Naive thymus-derived CD4-positive, alpha-beta T cell (primary cell): ENCODE measurements at regions of chr1 and their contacts with region 1.

Region 1: DNA sequence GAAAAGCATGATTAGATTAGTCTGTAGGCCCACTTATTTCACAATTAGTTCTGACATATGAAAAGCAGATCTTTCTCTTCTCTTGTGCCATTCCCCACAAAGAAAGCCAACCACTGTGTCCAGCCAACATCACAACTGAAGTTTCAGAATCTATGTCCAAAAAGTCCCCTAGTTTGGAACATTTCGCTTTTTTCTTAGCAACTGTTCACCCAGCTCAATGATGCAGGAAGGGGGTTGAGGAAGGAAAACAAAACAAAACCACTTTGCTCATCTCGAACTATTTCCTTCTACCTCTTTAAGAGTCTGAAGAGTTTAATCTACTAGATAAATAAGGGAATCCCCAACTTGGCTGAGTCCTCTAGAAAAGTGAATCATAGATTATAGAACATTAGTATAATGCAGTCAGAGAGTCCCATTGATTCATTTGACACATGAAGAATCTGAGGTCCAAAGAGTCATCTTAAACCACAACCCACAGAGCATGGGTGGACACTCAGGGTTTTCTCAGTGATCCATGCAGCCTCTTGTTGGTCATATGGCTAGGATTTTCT is 159.3 kb upstream of the SGIP1 start:
- DNase-seq: peak in 7 of 9 donors; percentile 27 to 49 (median 40)
- ATAC-seq: peak; percentile 83
- H3K4me3 ChIP-seq: no peak overlapping the region
- H3K4me3 Mint-ChIP-seq: peak overlapping the region in 9 of 10 donors; percentile 46 to 83 (median 67)
- H3K27ac ChIP-seq: peak overlapping the region; percentile 62
- H3K27ac Mint-ChIP-seq: peak overlapping the region; percentile 88 to 96 (median 92)
- H3K4me1 ChIP-seq: peaks cover 51 to 53% of the 10 kb centered on the region in 2 donors
- H3K4me1 Mint-ChIP-seq: peaks cover 52 to 74% (median 65%) of the 10 kb centered on the region in 7 donors
- H3K27me3 ChIP-seq: no peaks in the 10 kb centered on the region
- H3K27me3 Mint-ChIP-seq: no peaks in the 10 kb centered on the region

Region 2: DNA sequence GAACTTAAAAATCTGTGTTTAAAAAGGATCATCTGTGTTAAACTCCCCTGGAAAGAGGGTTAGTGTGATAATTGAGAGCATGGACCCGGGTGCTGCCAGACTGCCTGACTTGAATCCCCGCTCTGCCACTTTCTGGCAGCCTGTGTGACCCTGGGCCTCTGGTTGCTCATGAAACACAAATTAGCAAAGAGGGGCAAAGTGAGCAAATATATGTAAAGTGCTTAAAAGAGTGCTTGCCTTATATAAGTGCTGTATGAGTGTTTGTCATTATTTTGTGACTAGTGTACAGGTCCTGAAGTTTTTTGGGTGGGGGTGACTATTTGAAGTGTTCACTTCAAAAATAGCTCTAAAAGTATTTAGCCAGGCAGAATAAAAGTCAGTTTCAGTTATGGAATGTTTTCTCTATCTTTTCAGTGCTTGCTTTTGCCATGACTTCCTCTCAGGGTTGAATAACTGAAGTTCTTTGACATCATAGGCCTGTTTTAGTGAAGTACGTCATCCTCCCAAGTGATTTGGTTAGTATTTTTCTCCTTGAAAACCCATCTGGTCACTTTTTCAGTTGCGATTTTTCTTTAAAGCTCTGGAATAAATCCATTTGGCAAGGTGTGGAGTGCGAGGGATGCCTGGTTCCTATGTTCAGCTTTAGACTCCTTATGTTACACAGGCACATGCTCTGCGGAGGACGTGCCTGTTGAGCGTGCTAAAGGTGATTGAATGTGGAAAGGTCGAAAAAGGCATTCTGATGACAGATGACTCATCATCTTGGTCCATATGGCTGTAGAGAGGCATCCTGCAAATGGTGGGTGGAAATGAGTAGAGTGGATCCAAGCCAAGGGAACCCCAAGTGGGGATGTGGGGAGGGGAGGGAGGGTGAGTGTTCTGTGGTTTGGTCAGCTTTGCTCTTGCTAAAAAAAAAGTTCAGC is 1178.9 kb before region 1 on chr1:
- CTCF ChIA-PET with region 1: no interaction called
- POLR2A ChIA-PET with region 1: no interaction called
- intact Hi-C with region 1: no loop called
- DNase-seq: no peak
- ATAC-seq: no peak
- H3K4me3 ChIP-seq: no peak overlapping the region
- H3K4me3 Mint-ChIP-seq: no peak overlapping the region
- H3K27ac ChIP-seq: no peak overlapping the region
- H3K27ac Mint-ChIP-seq: peak overlapping the region in 1 of 9 donors; percentile 20
- H3K4me1 ChIP-seq: no peaks in the 10 kb centered on the region
- H3K4me1 Mint-ChIP-seq: peaks cover 0 to 17% (median 0%) of the 10 kb centered on the region in 7 donors
- H3K27me3 ChIP-seq: no peaks in the 10 kb centered on the region
- H3K27me3 Mint-ChIP-seq: peaks cover 0 to 11% (median 0%) of the 10 kb centered on the region in 5 donors

Region 3: DNA sequence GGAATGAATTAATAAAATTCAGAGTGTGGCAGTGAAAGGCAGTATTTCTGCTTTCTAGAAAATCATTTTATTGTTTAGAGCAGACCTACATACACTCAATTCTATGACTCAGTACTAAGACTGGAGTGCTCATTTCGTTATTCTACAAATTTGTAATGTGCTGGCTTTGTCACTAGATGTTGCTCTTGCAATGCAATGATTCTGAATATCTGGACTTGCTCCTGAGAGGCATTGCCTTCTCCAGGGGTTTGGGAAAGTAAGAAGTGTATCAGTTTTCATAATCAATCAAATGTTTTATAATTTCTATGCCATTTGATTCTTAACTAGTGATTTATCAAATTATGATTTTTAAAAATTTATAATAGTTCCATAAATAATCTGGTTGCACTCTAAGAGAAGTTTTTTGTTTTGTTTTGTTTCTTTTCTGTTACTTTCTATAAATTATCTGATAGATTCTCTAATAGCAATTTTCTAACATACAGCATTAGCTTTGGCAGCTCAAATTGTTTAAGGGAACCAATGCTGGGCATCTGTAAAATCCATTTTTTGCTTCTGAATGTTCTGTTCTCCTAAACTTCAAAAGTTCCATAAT is 121.2 kb before region 1 on chr1:
- CTCF ChIA-PET with region 1: no interaction called
- POLR2A ChIA-PET with region 1: no interaction called
- intact Hi-C with region 1: loop called in 1 of 2 experiments (anchors 2 kb)
- DNase-seq: peak in 6 of 9 donors; percentile 29 to 58 (median 46)
- ATAC-seq: peak; percentile 83
- H3K4me3 ChIP-seq: no peak overlapping the region
- H3K4me3 Mint-ChIP-seq: no peak overlapping the region
- H3K27ac ChIP-seq: no peak overlapping the region
- H3K27ac Mint-ChIP-seq: peak overlapping the region in 2 of 9 donors; percentile 19 to 64
- H3K4me1 ChIP-seq: peaks cover 10 to 12% of the 10 kb centered on the region in 2 donors
- H3K4me1 Mint-ChIP-seq: peaks cover 6 to 57% (median 19%) of the 10 kb centered on the region in 7 donors
- H3K27me3 ChIP-seq: no peaks in the 10 kb centered on the region
- H3K27me3 Mint-ChIP-seq: no peaks in the 10 kb centered on the region

Region 4: GRCh38 chr1:66276218-66276617 is 98.4 kb before region 1 on chr1:
- CTCF ChIA-PET with region 1: no interaction called
- POLR2A ChIA-PET with region 1: no interaction called
- intact Hi-C with region 1: no loop called
- DNase-seq: peak in 7 of 9 donors; percentile 23 to 58 (median 35)
- ATAC-seq: peak; percentile 74
- H3K4me3 ChIP-seq: peak overlapping the region; percentile 41
- H3K4me3 Mint-ChIP-seq: peak overlapping the region; percentile 14 to 89 (median 76)
- H3K27ac ChIP-seq: peak overlapping the region; percentile 60
- H3K27ac Mint-ChIP-seq: peak overlapping the region; percentile 39 to 97 (median 91)
- H3K4me1 ChIP-seq: peaks cover 50 to 72% of the 10 kb centered on the region in 2 donors
- H3K4me1 Mint-ChIP-seq: peaks cover 69 to 94% (median 92%) of the 10 kb centered on the region in 7 donors
- H3K27me3 ChIP-seq: no peaks in the 10 kb centered on the region
- H3K27me3 Mint-ChIP-seq: no peaks in the 10 kb centered on the region

Region 5: DNA sequence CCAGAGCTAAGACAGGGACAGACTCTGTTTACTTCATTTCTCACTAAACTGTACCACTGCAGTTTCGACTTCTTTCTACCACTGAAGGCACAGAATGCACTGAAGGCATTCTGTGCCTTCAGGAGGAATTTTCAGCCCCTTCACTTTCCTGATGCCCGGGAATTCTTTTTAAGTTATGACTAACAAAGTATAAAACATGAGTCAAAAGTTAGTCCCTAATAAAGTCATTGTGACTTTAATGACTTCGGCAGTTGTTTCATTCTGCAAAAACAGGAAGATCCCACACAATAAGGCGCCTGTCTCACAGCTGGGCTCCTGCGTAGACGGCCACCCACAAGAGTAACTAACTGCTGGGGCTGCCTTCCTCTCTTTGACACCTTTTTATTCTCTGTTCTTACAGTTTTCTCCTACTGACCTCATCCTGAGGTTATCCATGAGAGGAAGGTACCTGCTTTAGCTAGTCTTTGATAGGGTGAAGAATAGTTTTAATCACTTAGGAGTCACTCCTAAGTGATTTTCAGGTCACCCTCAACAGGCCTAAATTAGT is 24.6 kb before region 1 on chr1:
- CTCF ChIA-PET with region 1: no interaction called
- POLR2A ChIA-PET with region 1: no interaction called
- intact Hi-C with region 1: loop called in 1 of 2 experiments (anchors 1 kb)
- DNase-seq: peak in 7 of 9 donors; percentile 55 to 77 (median 71)
- ATAC-seq: peak; percentile 84
- H3K4me3 ChIP-seq: peak overlapping the region; percentile 33
- H3K4me3 Mint-ChIP-seq: peak overlapping the region; percentile 70 to 86 (median 77)
- H3K27ac ChIP-seq: peak overlapping the region; percentile 62
- H3K27ac Mint-ChIP-seq: peak overlapping the region; percentile 81 to 95 (median 90)
- H3K4me1 ChIP-seq: peaks cover 74 to 78% of the 10 kb centered on the region in 2 donors
- H3K4me1 Mint-ChIP-seq: peaks cover 66 to 100% (median 96%) of the 10 kb centered on the region in 7 donors
- H3K27me3 ChIP-seq: no peaks in the 10 kb centered on the region
- H3K27me3 Mint-ChIP-seq: no peaks in the 10 kb centered on the region

Region 6: GRCh38 chr1:66402194-66402593 is 27.6 kb after region 1 on chr1:
- CTCF ChIA-PET with region 1: no interaction called
- POLR2A ChIA-PET with region 1: no interaction called
- intact Hi-C with region 1: loop called in 1 of 2 experiments (anchors 2 kb)
- DNase-seq: no peak
- ATAC-seq: no peak
- H3K4me3 ChIP-seq: no peak overlapping the region
- H3K4me3 Mint-ChIP-seq: no peak overlapping the region
- H3K27ac ChIP-seq: no peak overlapping the region
- H3K27ac Mint-ChIP-seq: peak overlapping the region in 1 of 9 donors; percentile 14
- H3K4me1 ChIP-seq: no peaks in the 10 kb centered on the region
- H3K4me1 Mint-ChIP-seq: peaks cover 3 to 38% (median 10%) of the 10 kb centered on the region in 7 donors
- H3K27me3 ChIP-seq: no peaks in the 10 kb centered on the region
- H3K27me3 Mint-ChIP-seq: no peaks in the 10 kb centered on the region

Region 7: DNA sequence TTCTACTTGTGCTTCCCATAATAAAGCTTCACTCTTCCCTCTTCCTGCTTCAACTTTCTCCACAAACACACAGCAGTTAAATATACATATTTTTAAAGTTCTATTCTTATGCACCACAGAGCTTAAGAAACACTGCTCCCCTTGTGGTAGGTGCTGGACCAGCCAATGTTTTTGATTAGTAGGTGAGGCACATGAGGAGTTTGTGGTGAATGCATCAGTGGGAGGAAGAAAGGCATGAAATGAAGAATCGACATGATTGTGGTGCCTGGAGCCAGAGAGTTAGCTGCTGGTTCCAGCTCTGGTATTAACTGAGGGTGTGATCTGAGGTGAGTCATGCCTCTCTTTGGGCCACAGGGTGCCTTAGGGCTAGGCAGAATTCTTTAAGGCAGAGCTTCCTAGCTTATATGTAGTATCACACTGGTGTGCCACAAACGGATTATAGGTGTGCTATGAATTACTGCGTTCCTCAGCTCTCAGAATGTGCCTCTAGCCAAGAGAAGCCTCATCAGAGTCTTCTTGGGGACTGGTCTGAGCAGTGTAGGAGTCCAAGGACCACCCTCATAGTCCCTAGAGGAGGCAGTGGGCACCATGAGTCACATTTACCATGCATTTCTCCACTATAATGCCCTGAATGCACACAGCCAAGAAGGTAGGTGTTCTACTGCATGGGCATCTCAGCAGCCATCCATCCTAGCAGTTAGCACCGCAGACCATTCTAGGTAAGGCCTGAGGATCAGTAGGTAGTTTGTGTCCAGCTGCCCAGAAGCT is 61.9 kb after region 1 on chr1:
- CTCF ChIA-PET with region 1: interaction called, 3 read pairs
- POLR2A ChIA-PET with region 1: no interaction called
- intact Hi-C with region 1: loop called in 1 of 2 experiments (anchors 1 kb)
- DNase-seq: peak in 7 of 9 donors; percentile 12 to 52 (median 32)
- ATAC-seq: peak; percentile 79
- H3K4me3 ChIP-seq: no peak overlapping the region
- H3K4me3 Mint-ChIP-seq: no peak overlapping the region
- H3K27ac ChIP-seq: no peak overlapping the region
- H3K27ac Mint-ChIP-seq: peak overlapping the region in 4 of 9 donors; percentile 3 to 30 (median 8)
- H3K4me1 ChIP-seq: peaks cover 3 to 4% of the 10 kb centered on the region in 2 donors
- H3K4me1 Mint-ChIP-seq: peaks cover 6 to 36% (median 14%) of the 10 kb centered on the region in 7 donors
- H3K27me3 ChIP-seq: no peaks in the 10 kb centered on the region
- H3K27me3 Mint-ChIP-seq: no peaks in the 10 kb centered on the region